B cell (primary cell): ENCODE measurements at regions of chr1 and their contacts with region 1.

Region 1: GRCh38 chr1:48202030-48202752 is 20.3 kb upstream of the SLC5A9 start:
- DNase-seq: peak; percentile 57
- ATAC-seq: peak; percentile 21
- H3K4me3 ChIP-seq: no peak overlapping the region
- H3K4me3 Mint-ChIP-seq: no peak overlapping the region
- H3K27ac ChIP-seq: no peak overlapping the region
- H3K27ac Mint-ChIP-seq: no peak overlapping the region
- H3K4me1 ChIP-seq: no peaks in the 10 kb centered on the region
- H3K4me1 Mint-ChIP-seq: no peaks in the 10 kb centered on the region
- H3K27me3 ChIP-seq: peaks cover 0 to 3% (median 0%) of the 10 kb centered on the region in 4 experiments
- H3K27me3 Mint-ChIP-seq: peaks cover 15% of the 10 kb centered on the region
- CTCF ChIP-seq: peak; percentile 91

Region 2: DNA sequence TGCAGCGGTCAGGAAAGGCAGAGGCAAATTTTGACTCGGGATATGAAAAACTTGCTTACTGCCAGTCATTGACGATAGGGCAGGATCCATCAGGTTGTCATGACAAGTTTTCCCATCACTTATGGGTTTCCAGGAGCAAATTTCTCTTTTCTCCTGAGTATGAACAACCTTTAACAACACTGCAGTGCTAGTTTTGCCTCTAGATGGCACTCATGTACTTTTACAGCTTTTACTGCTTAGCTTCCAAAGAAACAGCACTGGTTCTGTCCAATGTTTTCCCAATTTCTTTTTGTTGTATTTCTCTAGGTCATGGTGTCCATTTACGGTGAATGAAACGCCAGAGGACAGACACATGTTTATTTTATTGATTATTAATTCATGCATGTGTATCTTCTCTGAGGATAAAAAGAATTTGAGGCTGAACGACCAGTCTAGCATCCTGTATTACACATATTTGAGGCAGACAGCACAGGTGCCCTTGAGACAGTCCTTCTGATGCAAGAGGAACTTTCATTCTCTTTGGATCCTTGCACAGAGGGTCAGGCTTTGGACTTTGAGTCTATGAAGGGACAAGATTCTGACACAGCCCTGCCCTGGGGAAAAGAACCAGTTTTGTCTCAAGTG is 92.7 kb before region 1 on chr1:
- CTCF ChIA-PET with region 1: interaction called, 5 read pairs
- POLR2A ChIA-PET with region 1: no interaction called
- intact Hi-C with region 1: loop called (anchors 2 kb)
- DNase-seq: peak; percentile 30
- ATAC-seq: no peak
- H3K4me3 ChIP-seq: no peak overlapping the region
- H3K4me3 Mint-ChIP-seq: no peak overlapping the region
- H3K27ac ChIP-seq: no peak overlapping the region
- H3K27ac Mint-ChIP-seq: no peak overlapping the region
- H3K4me1 ChIP-seq: no peaks in the 10 kb centered on the region
- H3K4me1 Mint-ChIP-seq: no peaks in the 10 kb centered on the region
- H3K27me3 ChIP-seq: peaks cover 0 to 5% (median under 1%) of the 10 kb centered on the region in 4 experiments
- H3K27me3 Mint-ChIP-seq: peaks cover 9% of the 10 kb centered on the region
- CTCF ChIP-seq: peak; percentile 73

Region 3: DNA sequence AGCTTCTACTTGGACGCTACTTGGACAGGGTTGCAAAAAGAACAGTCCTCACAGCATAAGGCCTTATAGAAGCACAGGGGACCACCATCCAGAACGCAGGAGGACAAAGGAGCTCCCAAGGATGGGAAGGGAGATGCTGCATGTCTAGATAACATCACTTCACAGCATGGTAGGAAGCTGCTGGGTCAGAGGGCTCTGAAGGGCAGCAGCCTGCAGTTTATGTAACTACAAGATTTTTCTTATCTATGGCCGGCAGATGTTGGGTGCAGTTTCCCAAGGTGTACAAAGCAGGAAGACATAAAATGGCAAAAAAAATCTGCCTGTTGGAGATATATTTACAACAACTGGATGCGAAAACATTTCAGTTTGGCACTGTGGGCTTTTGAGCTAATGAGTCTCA is 24.9 kb before region 1 on chr1:
- CTCF ChIA-PET with region 1: no interaction called
- POLR2A ChIA-PET with region 1: no interaction called
- intact Hi-C with region 1: no loop called
- DNase-seq: no peak
- ATAC-seq: no peak
- H3K4me3 ChIP-seq: no peak overlapping the region
- H3K4me3 Mint-ChIP-seq: no peak overlapping the region
- H3K27ac ChIP-seq: no peak overlapping the region
- H3K27ac Mint-ChIP-seq: no peak overlapping the region
- H3K4me1 ChIP-seq: no peaks in the 10 kb centered on the region
- H3K4me1 Mint-ChIP-seq: no peaks in the 10 kb centered on the region
- H3K27me3 ChIP-seq: no peaks in the 10 kb centered on the region
- H3K27me3 Mint-ChIP-seq: peaks cover 16% of the 10 kb centered on the region
- CTCF ChIP-seq: no peak